ACHN (cell line): ENCODE measurements at regions of chr17 and their contacts with region 1.

Region 1: DNA sequence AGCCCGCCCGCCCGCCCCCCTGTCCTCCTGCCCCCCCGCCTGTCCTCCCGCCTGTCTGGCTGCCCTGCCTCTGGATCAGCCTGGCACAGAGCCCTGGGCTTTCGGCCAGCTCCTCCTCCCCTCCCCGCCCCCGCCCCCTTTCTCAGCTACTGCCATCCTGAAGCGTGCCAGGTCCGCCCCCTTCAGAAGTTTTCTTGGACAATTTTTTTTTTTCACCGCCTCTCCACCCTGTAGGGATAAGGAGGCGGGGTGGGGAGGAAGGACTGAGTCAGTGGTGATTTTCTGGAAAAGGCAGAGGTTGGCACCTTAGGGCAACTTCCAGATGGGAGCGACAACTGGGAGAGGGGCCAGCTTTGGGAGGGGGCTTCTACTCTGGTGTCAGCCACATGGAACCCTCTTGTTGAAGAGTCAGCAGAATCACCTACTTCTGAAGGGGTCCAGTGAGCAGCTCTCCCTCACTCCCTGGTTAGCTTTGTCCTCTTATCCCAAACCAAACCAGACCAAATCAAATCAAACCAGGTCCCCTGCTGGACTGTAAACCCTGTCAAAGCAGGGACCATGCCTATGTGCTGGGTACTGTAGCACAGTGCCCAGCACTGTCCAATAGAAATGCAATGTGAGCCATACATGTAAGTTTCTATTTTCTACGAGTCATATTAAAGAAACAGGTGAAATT is 19.7 kb downstream of the IGF2BP1 start:
- DNase-seq: peak; percentile 95

Region 2: DNA sequence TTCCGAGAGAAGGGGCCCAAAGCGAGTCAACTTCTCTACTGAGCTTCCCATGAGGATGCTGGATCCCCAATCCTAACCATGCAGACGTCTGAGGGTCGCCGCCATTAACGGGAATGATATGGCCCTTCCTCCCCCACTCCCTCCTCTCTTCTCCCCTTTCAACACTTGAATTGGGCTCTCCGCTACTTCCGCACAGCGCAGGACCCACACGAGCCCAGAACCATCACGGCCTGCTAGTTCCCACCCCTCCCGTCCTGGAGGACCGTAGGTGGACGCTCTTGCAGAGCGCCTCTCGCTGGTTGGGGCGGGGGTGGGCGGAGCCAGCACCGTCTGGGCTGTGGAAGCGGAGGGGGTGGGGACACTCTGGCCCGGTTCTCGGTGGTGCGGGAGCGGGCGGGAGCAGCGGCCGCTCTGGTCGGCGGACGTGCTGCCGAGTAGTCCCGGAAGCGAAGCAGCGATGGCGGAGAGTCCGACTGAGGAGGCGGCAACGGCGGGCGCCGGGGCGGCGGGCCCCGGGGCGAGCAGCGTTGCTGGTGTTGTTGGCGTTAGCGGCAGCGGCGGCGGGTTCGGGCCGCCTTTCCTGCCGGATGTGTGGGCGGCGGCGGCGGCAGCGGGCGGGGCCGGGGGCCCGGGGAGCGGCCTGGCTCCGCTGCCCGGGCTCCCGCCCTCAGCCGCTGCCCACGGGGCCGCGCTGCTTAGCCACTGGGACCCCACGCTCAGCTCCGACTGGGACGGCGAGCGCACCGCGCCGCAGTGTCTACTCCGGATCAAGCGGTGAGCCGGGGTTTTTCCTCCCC is 108.7 kb before region 1 on chr17 and contains the start of gene UBE2Z:
- in situ Hi-C with region 1: loop called (anchors 25 kb)
- DNase-seq: peak; percentile 95